Common myeloid progenitor, CD34-positive (primary cell): ENCODE measurements at regions of chr22 and their contacts with region 1.

Region 1: GRCh38 chr22:22207845-22208564 is 36.6 kb upstream of the VPREB1 start:
- DNase-seq: peak; percentile 81 to 90 (median 87)
- H3K4me3 ChIP-seq: no peak overlapping the region
- H3K27ac ChIP-seq: no peak overlapping the region
- H3K4me1 ChIP-seq: peaks cover 6 to 13% (median 8%) of the 10 kb centered on the region in 4 experiments
- H3K27me3 ChIP-seq: peaks cover 0 to 72% (median 19%) of the 10 kb centered on the region in 5 experiments

Region 2: DNA sequence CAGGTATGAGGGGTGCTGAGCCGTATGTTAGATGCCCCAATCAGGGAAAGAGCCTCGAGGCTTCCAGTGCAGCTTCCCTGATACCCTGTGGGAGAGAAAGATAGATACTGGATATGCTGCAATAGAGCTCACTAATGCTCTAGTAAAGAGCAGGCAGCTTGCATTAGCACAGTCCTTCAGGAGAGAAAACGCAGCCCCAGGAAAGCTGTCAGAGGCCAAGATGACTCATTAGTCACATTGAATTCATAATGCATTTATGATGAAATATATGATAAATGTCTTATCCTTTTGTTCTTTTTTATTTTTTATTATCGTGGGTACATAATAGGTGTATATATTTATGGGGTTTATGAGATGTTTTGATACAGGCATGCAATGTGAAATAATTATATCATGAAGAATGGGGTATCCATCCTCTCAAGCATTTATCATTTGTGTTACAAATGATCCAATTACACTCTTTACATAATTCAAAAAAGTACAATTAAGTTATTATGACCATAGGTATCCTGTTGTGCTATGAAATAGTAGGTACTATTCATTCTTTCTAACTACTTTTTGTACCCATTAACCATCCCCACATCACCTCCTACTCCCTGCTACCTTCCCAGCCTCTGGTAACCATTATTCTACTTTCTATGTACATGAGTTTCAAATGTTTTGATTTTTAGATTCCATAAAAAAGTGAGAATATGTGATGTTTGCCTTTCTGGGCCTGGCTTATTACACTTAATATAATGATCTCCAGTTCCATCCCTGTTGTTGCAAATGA is 130.9 kb before region 1 on chr22:
- CTCF ChIA-PET with region 1: no interaction called
- POLR2A ChIA-PET with region 1: no interaction called
- DNase-seq: no peak
- H3K4me3 ChIP-seq: no peak overlapping the region
- H3K27ac ChIP-seq: no peak overlapping the region
- H3K4me1 ChIP-seq: no peaks in the 10 kb centered on the region
- H3K27me3 ChIP-seq: peaks cover 0 to 24% (median 7%) of the 10 kb centered on the region in 5 experiments

Region 3: GRCh38 chr22:22195265-22196017 is 12.6 kb before region 1 on chr22:
- CTCF ChIA-PET with region 1: interaction called, 22 read pairs
- POLR2A ChIA-PET with region 1: no interaction called
- DNase-seq: peak; percentile 84 to 85 (median 84)
- H3K4me3 ChIP-seq: no peak overlapping the region
- H3K27ac ChIP-seq: no peak overlapping the region
- H3K4me1 ChIP-seq: no peaks in the 10 kb centered on the region
- H3K27me3 ChIP-seq: peaks cover 0 to 36% (median 15%) of the 10 kb centered on the region in 5 experiments

Region 4: DNA sequence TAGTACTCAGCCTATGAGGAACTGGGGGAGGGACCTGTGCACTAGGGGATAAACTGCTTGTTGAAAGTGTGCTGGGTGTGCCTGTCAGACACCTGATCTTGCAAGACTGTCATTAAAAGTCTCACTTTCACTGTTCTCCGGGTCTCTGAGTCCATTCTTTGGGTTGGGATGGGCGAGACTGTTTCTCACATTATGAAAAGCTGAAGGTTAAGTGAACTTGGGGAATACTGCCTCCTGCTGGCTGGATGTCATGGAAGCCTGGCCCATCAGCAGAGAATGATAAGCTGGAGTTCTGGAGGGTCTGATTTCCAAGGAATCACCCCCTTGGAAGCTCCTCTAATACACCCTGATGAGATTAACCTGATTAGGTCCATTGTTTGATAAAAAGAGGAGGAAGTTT is 27.6 kb after region 1 on chr22:
- CTCF ChIA-PET with region 1: interaction called, 28 read pairs
- POLR2A ChIA-PET with region 1: no interaction called
- DNase-seq: peak; percentile 29 to 62 (median 44)
- H3K4me3 ChIP-seq: no peak overlapping the region
- H3K27ac ChIP-seq: no peak overlapping the region
- H3K4me1 ChIP-seq: peaks cover 0 to 2% (median 0%) of the 10 kb centered on the region in 4 experiments
- H3K27me3 ChIP-seq: peaks cover 0 to 6% (median 2%) of the 10 kb centered on the region in 5 experiments

Region 5: DNA sequence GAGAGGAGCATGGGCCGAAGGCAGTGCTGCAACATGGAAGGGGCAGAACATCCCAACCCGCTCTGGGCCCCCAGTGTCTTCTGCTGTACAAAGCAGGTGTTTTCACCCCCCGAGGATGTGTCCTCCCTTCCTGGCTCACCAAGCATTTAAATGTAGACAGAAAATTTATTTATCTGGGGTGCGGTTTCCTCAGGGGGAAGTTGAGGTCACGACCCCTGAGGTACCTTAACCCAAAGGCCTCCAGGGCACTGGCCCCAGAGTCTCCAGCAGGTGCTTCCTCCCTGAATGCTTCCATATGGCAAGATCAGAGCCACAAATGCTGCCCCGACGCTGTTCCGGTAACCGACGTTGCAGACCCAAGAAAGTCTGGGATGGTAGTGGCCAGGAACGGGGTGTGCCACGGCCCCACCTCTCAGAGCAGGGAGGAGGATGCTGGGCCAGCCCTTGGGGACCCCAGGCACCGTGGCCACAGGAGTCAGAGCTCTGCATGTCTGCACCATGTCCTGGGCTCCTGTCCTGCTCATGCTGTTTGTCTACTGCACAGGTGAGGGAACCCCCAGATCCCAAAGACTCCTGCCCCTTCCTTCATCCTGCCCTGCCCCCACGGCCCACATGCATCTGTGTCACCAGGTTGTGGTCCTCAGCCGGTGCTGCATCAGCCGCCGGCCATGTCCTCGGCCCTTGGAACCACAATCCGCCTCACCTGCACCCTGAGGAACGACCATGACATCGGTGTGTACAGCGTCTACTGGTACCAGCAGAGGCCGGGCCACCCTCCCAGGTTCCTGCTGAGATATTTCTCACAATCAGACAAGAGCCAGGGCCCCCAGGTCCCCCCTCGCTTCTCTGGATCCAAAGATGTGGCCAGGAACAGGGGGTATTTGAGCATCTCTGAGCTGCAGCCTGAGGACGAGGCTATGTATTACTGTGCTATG is 36.6 kb after region 1 on chr22 and contains the start of gene VPREB1:
- CTCF ChIA-PET with region 1: interaction called, 19 read pairs
- POLR2A ChIA-PET with region 1: no interaction called
- DNase-seq: peak; percentile 30 to 90 (median 90)
- H3K4me3 ChIP-seq: peak within 1 kb of the TSS in 2 of 7 experiments; percentile 6 to 36
- H3K27ac ChIP-seq: no peak within 1 kb of the TSS
- H3K4me1 ChIP-seq: peaks cover 14 to 58% (median 35%) of the 10 kb centered on the region in 4 experiments
- H3K27me3 ChIP-seq: peaks cover 0 to 5% (median 0%) of the 10 kb centered on the region in 5 experiments